ENCODE measurements at regions of chr1 and their contacts with region 1.

Region 1: DNA sequence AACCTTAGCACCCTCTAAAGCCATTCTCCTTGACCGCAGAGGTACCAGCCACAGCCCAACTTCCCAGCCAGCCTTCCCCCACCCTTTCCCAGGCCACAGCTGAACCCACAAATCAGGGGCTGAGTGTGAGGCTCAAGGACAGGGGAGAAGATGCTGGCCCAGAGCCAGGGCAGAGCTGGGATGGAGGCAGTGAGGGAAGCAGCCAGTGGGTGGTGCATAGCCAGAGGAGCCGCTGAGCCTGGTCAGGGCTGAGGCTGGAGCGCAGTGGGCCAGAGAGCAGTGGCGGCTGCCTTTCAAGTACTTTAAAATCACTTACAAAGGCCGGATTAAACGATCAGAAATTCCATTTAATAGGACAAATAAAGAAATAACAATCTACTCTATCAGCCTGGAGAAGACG is 36.3 kb downstream of the DMAP1 start:
- DNase-seq: no peak
- H3K4me3 ChIP-seq: no peak overlapping the region
- H3K27ac ChIP-seq: no peak overlapping the region
- H3K4me1 ChIP-seq: no peaks in the 10 kb centered on the region
- H3K27me3 ChIP-seq: no peaks in the 10 kb centered on the region
- CTCF ChIP-seq: no peak

Region 2: GRCh38 chr1:43796111-43796581 is 453.4 kb before region 1 on chr1:
- CTCF ChIA-PET with region 1: no interaction called
- dilution Hi-C with region 1: no loop called
- in situ Hi-C with region 1: no loop called
- intact Hi-C with region 1: no loop called
- DNase-seq: peak; percentile 27
- H3K4me3 ChIP-seq: no peak overlapping the region
- H3K27ac ChIP-seq: peak overlapping the region; percentile 16
- H3K4me1 ChIP-seq: peaks cover 32% of the 10 kb centered on the region
- H3K27me3 ChIP-seq: no peaks in the 10 kb centered on the region
- CTCF ChIP-seq: no peak

Region 3: GRCh38 chr1:44294588-44295007 is 45.1 kb after region 1 on chr1:
- CTCF ChIA-PET with region 1: no interaction called
- dilution Hi-C with region 1: loop called (anchors 5 kb)
- in situ Hi-C with region 1: no loop called
- intact Hi-C with region 1: no loop called
- DNase-seq: no peak
- H3K4me3 ChIP-seq: no peak overlapping the region
- H3K27ac ChIP-seq: no peak overlapping the region
- H3K4me1 ChIP-seq: no peaks in the 10 kb centered on the region
- H3K27me3 ChIP-seq: no peaks in the 10 kb centered on the region
- CTCF ChIP-seq: no peak

Region 4: GRCh38 chr1:44531785-44532566 is 282.4 kb after region 1 on chr1:
- CTCF ChIA-PET with region 1: interaction called, 17 read pairs
- dilution Hi-C with region 1: no loop called
- in situ Hi-C with region 1: no loop called
- intact Hi-C with region 1: no loop called
- DNase-seq: peak; percentile 82
- H3K4me3 ChIP-seq: no peak overlapping the region
- H3K27ac ChIP-seq: peak overlapping the region; percentile 7
- H3K4me1 ChIP-seq: peaks cover 20% of the 10 kb centered on the region
- H3K27me3 ChIP-seq: no peaks in the 10 kb centered on the region
- CTCF ChIP-seq: no peak